ENCODE measurements at regions of chr5 and their contacts with region 1.

Region 1: DNA sequence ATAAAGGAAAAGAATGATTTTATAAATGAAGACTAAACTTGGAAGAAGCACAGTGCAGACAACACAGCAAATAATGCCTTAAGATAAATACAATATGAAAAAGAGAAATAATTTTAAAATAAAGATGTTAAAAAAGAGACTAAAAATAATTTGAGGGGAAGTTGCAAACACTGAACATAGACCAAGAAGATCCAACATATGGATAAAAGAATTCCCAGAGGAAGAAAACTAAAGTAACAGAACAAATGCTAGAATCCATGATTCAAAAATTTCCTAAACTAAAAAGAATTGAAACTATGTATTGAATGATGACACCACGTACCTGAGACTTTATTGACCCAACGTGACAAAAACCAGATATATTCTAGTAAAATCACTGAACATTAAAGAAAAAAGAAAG is 18.7 kb upstream of the SMIM23 start:
- DNase-seq: no peak
- H3K4me3 ChIP-seq: no peak overlapping the region
- H3K27ac ChIP-seq: no peak overlapping the region
- H3K4me1 ChIP-seq: no peaks in the 10 kb centered on the region
- H3K27me3 ChIP-seq: no peaks in the 10 kb centered on the region
- CTCF ChIP-seq: no peak
- EP300 ChIP-seq: no peak
- POLR2A ChIP-seq: no peak

Region 2: DNA sequence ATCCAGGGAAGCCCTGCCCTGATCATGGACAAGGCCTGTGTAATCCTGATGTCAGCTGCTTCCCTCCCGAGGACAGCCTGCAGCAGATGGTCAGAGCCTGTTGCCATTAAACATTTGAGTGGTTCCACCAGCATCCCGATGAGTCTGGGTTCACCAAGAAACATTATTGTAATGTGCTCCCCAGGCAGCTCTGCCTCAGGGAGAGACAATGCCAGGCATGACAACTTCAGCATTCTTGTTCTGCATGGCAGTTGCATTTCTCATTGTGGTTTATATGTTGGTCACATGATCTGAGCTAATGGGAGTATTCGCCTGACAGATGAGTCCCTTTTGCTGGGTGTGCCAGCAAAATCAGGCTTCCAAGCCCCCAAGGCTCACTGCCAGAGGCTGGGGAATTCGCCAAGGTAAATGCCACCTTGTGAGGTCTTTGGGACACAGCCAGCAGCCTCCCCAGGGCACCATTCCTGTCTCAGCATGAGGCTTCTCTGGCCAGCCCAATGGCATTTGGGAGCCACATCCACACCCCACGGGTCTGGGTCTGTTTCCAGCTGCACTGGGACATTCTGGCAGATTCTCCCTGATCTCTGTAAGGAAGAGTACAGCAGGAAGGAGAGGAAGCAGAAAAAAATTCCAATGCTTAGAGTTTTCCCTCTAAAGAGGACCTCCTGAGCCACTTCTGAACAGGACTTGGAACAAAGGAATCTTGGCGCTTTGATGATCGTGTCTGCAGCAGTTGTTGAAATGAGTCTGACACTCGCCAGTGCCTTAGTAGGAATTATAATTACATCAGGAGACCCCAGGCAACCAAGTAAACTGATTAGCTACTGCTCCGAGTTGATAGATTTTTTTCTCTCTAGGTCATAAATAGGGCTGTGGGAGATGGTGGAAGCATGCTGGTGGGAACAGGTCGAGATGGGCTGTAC is 1244.4 kb before region 1 on chr5:
- in situ Hi-C with region 1: no loop called
- intact Hi-C with region 1: loop called (anchors 5 kb)
- DNase-seq: no peak
- H3K4me3 ChIP-seq: no peak overlapping the region
- H3K27ac ChIP-seq: no peak overlapping the region
- H3K4me1 ChIP-seq: no peaks in the 10 kb centered on the region
- H3K27me3 ChIP-seq: no peaks in the 10 kb centered on the region
- CTCF ChIP-seq: no peak
- EP300 ChIP-seq: no peak
- POLR2A ChIP-seq: no peak

Region 3: GRCh38 chr5:170757182-170757601 is 1009.7 kb before region 1 on chr5:
- in situ Hi-C with region 1: no loop called
- intact Hi-C with region 1: no loop called
- DNase-seq: no peak
- H3K4me3 ChIP-seq: no peak overlapping the region
- H3K27ac ChIP-seq: no peak overlapping the region
- H3K4me1 ChIP-seq: peaks cover 6 to 21% (median 14%) of the 10 kb centered on the region in 4 donors
- H3K27me3 ChIP-seq: no peaks in the 10 kb centered on the region
- CTCF ChIP-seq: no peak
- EP300 ChIP-seq: no peak
- POLR2A ChIP-seq: no peak

Region 4: DNA sequence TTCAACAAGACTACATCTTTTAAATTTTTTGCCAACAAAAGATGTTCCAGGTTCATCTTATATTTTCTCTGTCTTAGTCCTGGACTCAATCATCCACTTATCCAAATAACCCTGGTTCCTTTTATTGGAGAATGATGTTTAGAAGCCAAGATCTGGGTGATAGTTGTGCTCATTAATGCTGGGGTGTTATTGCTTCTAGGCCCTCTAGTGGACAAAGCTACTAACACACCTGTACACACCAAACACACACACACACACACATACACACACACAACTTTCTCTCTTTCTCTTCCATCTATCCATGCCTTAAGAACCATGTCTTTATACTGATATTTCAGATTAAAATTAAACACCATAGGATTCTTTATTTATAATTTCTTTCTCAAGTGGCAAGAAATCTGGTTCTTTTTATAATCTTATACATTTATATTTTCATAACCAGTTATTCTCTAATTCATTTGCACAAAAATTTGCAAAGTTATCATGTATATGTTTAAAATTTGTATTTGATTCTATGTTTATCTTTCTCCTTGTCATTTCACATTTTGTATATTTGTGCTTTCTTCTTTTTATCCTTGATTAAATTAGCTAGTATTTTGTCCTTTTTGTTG is 160.4 kb before region 1 on chr5:
- in situ Hi-C with region 1: no loop called
- intact Hi-C with region 1: no loop called
- DNase-seq: no peak
- H3K4me3 ChIP-seq: no peak overlapping the region
- H3K27ac ChIP-seq: no peak overlapping the region
- H3K4me1 ChIP-seq: no peaks in the 10 kb centered on the region
- H3K27me3 ChIP-seq: no peaks in the 10 kb centered on the region
- CTCF ChIP-seq: peak in 4 of 5 experiments; percentile 10 to 28 (median 27)
- EP300 ChIP-seq: no peak
- POLR2A ChIP-seq: no peak

Measured in transverse colon (tissue), 4 donors.